Activated T-helper 2 cell treated with anti-CD3 and anti-CD28 coated beads, Interferon-gamma antibody, Interleukin-2, Interleukin-4, amounts not matched to agents 10 μg/mL and 5 μg/mL and 100 μg/mL, durations not matched to agents 14 hours and 24 hours and 36 hours (primary cell): ENCODE measurements at regions of chr2 and their contacts with region 1.

Region 1: GRCh38 chr2:160332318-160332717 is 132.2 kb upstream of the ITGB6 start:
- DNase-seq: no peak
- H3K4me3 Mint-ChIP-seq: no peak overlapping the region
- H3K27ac Mint-ChIP-seq: peak overlapping the region; percentile 41
- H3K4me1 Mint-ChIP-seq: peaks cover 69% of the 10 kb centered on the region
- H3K27me3 Mint-ChIP-seq: no peaks in the 10 kb centered on the region

Region 2: DNA sequence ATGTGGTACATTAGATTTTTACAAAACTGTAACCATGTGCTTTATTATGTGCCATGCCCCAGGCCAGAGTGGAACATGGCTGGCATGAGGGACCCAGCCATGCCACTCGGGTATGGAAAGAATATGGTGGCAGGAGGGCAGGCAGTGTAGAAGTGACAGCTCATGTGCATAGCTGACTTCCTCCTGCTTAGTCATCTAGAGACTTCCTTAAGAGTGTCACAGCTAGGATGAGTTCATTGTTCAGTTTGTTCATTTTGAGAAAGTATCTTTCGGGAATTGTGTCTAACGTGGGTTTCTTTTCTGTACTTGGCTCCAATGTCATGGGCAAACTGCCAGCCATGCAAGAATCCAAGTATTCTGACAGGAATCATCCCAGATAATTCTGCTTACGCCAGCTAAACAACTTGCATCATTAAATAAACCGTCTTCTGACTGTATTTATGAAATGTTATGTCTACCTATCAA is 37.9 kb before region 1 on chr2:
- intact Hi-C with region 1: loop called (anchors 5 kb)
- DNase-seq: no peak
- H3K4me3 Mint-ChIP-seq: no peak overlapping the region
- H3K27ac Mint-ChIP-seq: no peak overlapping the region
- H3K4me1 Mint-ChIP-seq: peaks cover 48% of the 10 kb centered on the region
- H3K27me3 Mint-ChIP-seq: no peaks in the 10 kb centered on the region

Region 3: GRCh38 chr2:160387558-160388262 is 55.4 kb after region 1 on chr2:
- intact Hi-C with region 1: loop called (anchors 5 kb)
- DNase-seq: no peak
- H3K4me3 Mint-ChIP-seq: no peak overlapping the region
- H3K27ac Mint-ChIP-seq: no peak overlapping the region
- H3K4me1 Mint-ChIP-seq: peaks cover 58% of the 10 kb centered on the region
- H3K27me3 Mint-ChIP-seq: no peaks in the 10 kb centered on the region

Region 4: GRCh38 chr2:160440888-160441287 is 108.6 kb after region 1 on chr2:
- intact Hi-C with region 1: no loop called
- DNase-seq: no peak
- H3K4me3 Mint-ChIP-seq: no peak overlapping the region
- H3K27ac Mint-ChIP-seq: no peak overlapping the region
- H3K4me1 Mint-ChIP-seq: peaks cover 2% of the 10 kb centered on the region
- H3K27me3 Mint-ChIP-seq: peaks cover 19% of the 10 kb centered on the region